ENCODE measurements at regions of chr12 and their contacts with region 1.

Region 1: DNA sequence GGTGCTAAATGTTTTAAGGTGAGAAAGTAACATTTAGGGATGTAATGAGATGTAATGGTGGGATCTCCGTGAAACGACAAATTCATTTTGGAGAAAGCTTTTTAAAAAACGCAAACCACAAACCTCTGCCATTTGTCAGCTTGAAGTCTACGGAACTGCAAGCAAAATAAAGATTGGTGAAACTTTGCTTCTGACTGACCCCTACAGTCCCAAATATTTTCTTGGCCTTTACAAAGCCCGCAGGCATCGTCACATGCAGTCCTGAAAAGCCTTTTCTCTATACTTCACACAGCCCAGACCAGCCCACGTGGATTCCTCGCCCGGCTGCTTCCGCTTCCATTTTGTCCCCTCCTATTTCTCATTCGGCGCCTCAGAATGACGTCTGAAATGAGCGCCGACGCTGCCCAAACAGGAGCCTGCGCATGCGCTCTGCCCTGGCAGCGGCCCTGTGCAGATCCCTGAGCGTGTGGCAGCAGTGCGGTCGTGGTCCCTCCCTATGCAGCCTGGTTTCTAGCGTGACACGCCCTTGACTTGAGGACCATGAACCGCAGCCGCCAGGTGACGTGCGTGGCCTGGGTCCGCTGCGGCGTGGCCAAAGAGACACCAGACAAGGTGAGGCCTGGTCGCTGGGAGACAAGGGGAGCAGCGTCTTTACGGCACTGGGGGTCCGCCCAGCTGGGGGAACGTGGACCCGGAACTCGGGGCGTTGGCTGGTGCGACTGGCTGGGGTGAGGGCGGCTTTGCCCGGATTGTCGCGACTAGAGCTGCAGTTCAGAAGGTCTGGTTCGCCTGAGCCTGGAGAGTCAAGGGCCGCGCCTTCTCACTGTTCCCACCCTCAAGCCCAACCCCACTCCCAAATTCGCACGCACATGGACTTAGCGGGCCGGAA is at the start of gene PWP1:
- DNase-seq: peak; percentile 90
- H3K4me3 ChIP-seq: peak within 1 kb of the TSS; percentile 99
- CTCF ChIP-seq: no peak

Region 2: DNA sequence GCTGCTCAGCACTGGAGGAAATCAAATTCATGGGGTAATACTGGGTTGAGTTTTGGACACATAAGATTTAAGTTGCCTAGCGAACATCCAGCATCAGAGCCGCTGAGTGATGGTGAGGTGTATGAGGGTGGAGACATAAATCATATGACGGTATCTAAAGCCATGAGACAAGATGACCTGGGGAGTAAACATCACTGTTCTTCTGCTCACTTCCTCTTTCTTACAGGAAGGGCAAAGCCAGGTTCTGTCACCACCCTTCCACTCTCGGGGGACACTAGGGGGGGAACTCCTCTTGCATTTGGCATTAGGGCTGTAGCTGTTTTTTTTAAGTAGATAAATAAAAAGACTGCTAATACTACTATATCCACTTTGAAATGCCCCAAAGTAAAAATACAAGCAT is 51.3 kb after region 1 on chr12:
- in situ Hi-C with region 1: loop called (anchors 5 kb)
- DNase-seq: no peak
- H3K4me3 ChIP-seq: no peak overlapping the region
- CTCF ChIP-seq: no peak

Measured in astrocyte of the cerebellum (primary cell).